HepG2 (cell line): ENCODE measurements at regions of chr18 and their contacts with region 1.

Region 1: DNA sequence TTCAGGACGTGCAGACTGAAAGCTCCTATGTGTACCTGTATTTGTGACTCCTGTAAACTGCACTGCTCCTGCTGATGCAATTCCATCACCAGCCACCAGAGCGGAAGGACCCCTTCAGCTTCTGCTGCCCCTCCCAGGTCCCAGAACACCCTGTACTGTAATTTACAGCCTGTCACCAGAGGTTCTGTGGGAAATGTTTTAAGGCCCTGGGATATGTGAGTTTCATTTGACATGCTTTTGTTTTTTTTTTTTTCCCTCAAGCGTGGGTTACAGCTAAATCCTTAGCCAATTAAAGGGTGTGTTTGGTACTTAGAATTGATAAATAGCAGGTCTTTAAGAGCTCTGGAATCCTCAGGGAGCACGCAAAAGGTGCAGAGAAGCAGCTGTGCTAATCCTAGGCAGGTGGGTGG is 79.4 kb downstream of the KCTD1 start:
- DNase-seq: peak; percentile 36
- ATAC-seq: peak; percentile 99
- H3K4me3 ChIP-seq: no peak overlapping the region
- H3K27ac ChIP-seq: no peak overlapping the region
- H3K4me1 ChIP-seq: no peaks in the 10 kb centered on the region
- H3K27me3 ChIP-seq: no peaks in the 10 kb centered on the region
- CTCF ChIP-seq: peak; percentile 47
- EP300 ChIP-seq: no peak
- POLR2A ChIP-seq: no peak
- RAD21 ChIP-seq: no peak

Region 2: DNA sequence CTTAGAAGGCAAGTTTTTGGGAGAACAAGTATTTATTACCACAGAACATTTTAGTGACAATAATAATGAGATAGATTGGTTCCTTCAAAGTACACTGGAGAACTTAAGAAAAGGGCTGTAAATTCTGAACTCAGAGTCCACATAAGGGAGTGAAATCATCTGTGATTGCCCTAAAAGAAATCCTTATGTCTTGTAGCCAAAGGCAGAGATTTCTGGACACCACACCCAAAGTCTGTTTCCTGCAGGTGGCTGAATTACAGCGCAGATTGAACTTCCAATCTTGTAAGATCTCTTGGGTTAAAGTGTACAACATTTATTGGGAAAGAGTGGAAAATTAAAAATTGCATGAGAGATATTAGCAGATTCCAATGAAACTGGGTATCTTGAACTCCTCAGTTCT is 98.9 kb before region 1 on chr18:
- CTCF ChIA-PET with region 1: no interaction called
- POLR2A ChIA-PET with region 1: no interaction called
- in situ Hi-C with region 1: no loop called
- intact Hi-C with region 1: no loop called
- DNase-seq: no peak
- ATAC-seq: no peak
- H3K4me3 ChIP-seq: no peak overlapping the region
- H3K27ac ChIP-seq: no peak overlapping the region
- H3K4me1 ChIP-seq: no peaks in the 10 kb centered on the region
- H3K27me3 ChIP-seq: no peaks in the 10 kb centered on the region
- CTCF ChIP-seq: no peak
- EP300 ChIP-seq: no peak
- POLR2A ChIP-seq: no peak
- RAD21 ChIP-seq: no peak

Region 3: GRCh38 chr18:26487437-26487836 is 18.5 kb after region 1 on chr18:
- CTCF ChIA-PET with region 1: no interaction called
- POLR2A ChIA-PET with region 1: no interaction called
- in situ Hi-C with region 1: no loop called
- intact Hi-C with region 1: loop called (anchors 2 kb)
- DNase-seq: peak; percentile 63
- ATAC-seq: peak; percentile 14; the same call in 1 of the 3 replicates
- H3K4me3 ChIP-seq: no peak overlapping the region
- H3K27ac ChIP-seq: no peak overlapping the region
- H3K4me1 ChIP-seq: peaks cover 56% of the 10 kb centered on the region
- H3K27me3 ChIP-seq: no peaks in the 10 kb centered on the region
- CTCF ChIP-seq: no peak
- EP300 ChIP-seq: peak in 1 of 2 experiments; percentile 19; a peak in 1 of 4 replicates
- POLR2A ChIP-seq: no peak
- RAD21 ChIP-seq: no peak